ENCODE measurements at regions of chr11 and their contacts with region 1.

Region 1: DNA sequence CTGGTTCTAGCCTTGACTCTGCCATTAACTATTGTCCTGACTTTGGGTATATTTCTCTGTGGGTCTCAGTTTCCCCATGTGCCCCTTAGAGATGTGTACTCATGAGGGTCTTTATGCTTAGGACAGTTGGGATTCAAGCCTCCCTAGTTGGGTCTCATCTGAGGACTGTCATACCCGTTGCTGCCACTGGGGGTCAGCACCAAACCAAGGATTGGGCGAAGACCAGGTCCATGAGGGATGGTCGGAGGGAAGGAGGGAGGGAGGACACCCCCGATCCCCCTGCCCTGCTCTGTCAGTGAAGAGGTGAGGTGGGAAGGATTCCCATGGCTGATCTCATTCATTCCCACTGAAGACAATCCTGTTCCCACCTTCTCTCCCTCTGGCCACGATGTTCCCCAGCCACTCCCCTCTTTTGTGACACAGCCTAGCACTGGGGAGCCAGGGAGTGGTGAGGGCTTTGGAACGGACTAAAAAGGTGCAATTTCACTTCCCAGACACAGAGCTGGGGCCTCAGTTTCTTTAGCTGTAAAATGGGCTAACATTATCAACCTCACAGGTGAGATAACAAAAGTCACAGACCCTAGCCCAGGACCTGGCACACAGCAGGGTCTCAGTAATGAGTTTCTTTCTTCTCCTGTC is 12.4 kb upstream of the KLHL35 start:
- DNase-seq: peak; percentile 82
- H3K4me3 Mint-ChIP-seq: no peak overlapping the region
- H3K27ac Mint-ChIP-seq: no peak overlapping the region
- H3K4me1 Mint-ChIP-seq: no peaks in the 10 kb centered on the region
- H3K27me3 Mint-ChIP-seq: no peaks in the 10 kb centered on the region

Region 2: GRCh38 chr11:75280227-75280701 is 165.2 kb before region 1 on chr11:
- CTCF ChIA-PET with region 1: no interaction called
- intact Hi-C with region 1: no loop called
- DNase-seq: peak; percentile 86
- H3K4me3 Mint-ChIP-seq: no peak overlapping the region
- H3K27ac Mint-ChIP-seq: peak overlapping the region; percentile 73
- H3K4me1 Mint-ChIP-seq: peaks cover 38% of the 10 kb centered on the region
- H3K27me3 Mint-ChIP-seq: no peaks in the 10 kb centered on the region

Region 3: DNA sequence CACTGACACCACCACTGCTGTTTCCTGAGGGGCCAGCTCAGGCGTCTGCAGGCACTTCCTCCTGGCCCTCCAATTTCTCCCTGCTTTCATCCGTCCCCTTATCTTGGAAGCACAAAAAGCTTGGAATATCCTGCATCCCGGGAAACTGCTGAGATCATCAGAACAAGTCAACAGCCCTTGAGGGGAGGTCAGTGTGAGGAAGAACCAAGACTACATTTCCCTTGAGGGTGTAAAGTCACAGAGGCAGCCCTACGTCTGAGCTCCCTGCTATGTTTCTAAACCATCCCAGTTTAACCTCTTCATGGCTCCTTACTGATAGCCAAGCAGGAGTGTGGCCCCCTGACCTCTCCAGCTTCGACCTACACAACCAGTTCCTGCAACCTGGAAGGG is 18.0 kb after region 1 on chr11:
- CTCF ChIA-PET with region 1: interaction called, 10 read pairs
- intact Hi-C with region 1: no loop called
- DNase-seq: no peak
- H3K4me3 Mint-ChIP-seq: no peak overlapping the region
- H3K27ac Mint-ChIP-seq: no peak overlapping the region
- H3K4me1 Mint-ChIP-seq: no peaks in the 10 kb centered on the region
- H3K27me3 Mint-ChIP-seq: no peaks in the 10 kb centered on the region

Region 4: DNA sequence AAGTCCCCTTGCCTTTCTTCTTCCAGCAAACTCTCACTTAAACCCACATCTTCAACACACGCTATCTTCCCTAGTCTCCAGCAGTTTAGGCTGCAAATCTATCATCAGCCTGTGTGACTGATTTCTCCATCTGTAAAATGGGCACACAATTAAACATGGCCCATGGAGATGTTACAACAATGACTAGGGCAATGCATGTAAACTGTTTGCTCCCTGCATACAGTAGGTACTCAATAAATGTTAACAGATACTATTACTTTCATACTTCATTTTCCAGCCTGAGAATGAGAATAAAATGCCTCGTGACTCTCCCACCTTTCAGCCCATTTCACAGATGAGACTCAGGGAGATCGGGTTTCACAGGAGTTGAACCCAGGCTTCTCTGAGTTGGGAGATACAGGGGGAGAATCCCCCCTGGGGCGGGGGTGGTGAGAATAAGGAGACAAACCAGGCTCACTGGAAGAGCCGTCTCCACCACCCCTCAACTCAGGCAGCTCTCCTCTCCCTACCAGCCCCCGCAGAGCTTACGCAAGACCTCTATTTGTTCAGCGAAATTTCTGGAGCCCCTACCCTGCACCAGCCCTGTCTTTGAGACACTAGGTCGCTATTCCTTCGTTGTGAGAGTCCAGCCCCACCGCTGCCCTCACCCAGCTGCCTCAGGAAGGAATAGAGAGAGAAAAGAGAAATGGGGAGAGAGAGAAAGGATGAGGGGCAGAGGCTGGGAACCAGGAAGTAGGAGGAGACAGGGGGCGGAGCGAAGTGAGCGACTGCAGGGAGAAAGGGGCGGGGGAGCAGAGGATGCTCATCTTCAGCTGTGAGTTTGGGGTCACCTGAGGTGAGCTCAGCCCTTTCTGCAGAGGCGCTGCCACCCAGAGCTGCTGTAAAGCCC is 29.7 kb after region 1 on chr11:
- CTCF ChIA-PET with region 1: interaction called, 11 read pairs
- intact Hi-C with region 1: no loop called
- DNase-seq: peak; percentile 81
- H3K4me3 Mint-ChIP-seq: peak overlapping the region; percentile 17
- H3K27ac Mint-ChIP-seq: peak overlapping the region; percentile 83
- H3K4me1 Mint-ChIP-seq: peaks cover 16% of the 10 kb centered on the region
- H3K27me3 Mint-ChIP-seq: no peaks in the 10 kb centered on the region

Region 5: GRCh38 chr11:75525596-75526541 is 80.4 kb after region 1 on chr11 and contains the start of gene GDPD5:
- CTCF ChIA-PET with region 1: interaction called, 153 read pairs
- intact Hi-C with region 1: loop called (anchors 1 kb)
- DNase-seq: peak; percentile 90
- H3K4me3 Mint-ChIP-seq: peak within 1 kb of the TSS; percentile 72
- H3K27ac Mint-ChIP-seq: no peak within 1 kb of the TSS
- H3K4me1 Mint-ChIP-seq: peaks cover 19% of the 10 kb centered on the region
- H3K27me3 Mint-ChIP-seq: peaks cover 5% of the 10 kb centered on the region
- total RNA-seq, gene GDPD5: 13.3 to 13.5 TPM

Region 6: DNA sequence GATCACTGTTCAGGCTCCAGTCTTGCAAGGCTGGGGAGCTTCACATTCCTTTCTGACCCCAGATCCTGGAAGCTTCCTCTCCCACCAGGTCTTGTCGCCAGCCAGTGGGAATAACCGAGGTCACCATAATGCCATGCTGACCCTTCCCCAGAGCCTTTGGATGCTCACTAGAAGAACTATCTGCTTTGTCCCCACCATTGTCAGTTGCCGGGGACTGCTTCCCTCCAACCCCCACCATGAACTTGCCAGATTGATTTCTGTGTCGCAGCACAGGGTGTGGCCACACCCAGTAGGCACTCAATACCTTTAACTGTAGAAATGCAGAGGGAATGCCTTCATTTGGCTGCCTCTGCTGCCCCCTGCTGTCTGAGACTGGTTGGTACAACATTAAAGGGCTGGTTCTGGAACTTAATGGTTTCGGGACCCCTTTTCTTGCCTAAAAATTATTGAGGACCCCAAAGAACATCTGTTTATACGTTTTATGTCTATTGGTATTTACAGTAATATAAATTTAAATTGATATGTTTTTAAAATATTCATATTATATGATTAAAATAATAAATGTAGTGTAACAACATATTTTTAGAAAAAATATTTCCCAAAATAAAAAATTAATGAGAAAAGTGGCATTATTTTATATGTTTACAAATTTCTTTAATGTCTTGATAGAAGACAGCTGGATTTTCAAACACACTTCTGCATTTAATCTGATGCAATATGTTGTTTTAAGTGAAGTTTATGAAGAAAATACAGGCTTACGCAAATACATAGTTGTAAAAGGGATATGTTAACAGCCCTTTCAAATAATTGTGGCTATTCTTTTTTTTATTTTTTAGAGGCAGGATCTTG is 87.0 kb after region 1 on chr11:
- CTCF ChIA-PET with region 1: interaction called, 153 read pairs
- intact Hi-C with region 1: loop called (anchors 1 kb)
- DNase-seq: peak; percentile 91
- H3K4me3 Mint-ChIP-seq: no peak overlapping the region
- H3K27ac Mint-ChIP-seq: no peak overlapping the region
- H3K4me1 Mint-ChIP-seq: peaks cover 14% of the 10 kb centered on the region
- H3K27me3 Mint-ChIP-seq: no peaks in the 10 kb centered on the region

Region 7: GRCh38 chr11:75577207-75577606 is 131.8 kb after region 1 on chr11:
- CTCF ChIA-PET with region 1: interaction called, 7 read pairs
- intact Hi-C with region 1: loop called (anchors 5 kb)
- DNase-seq: peak; percentile 72
- H3K4me3 Mint-ChIP-seq: no peak overlapping the region
- H3K27ac Mint-ChIP-seq: no peak overlapping the region
- H3K4me1 Mint-ChIP-seq: peaks cover 9% of the 10 kb centered on the region
- H3K27me3 Mint-ChIP-seq: peaks cover 2% of the 10 kb centered on the region